Ovary (tissue), 10 donors: ENCODE measurements at regions of chr21 and their contacts with region 1.

Region 1: GRCh38 chr21:46219591-46220239 is 8.9 kb downstream of the LSS start:
- DNase-seq: peak in 1 of 5 donors; percentile 32
- H3K4me3 ChIP-seq: no peak overlapping the region
- H3K27ac ChIP-seq: no peak overlapping the region
- H3K4me1 ChIP-seq: no peaks in the 10 kb centered on the region
- H3K27me3 ChIP-seq: no peaks in the 10 kb centered on the region
- CTCF ChIP-seq: no peak
- EP300 ChIP-seq: no peak
- POLR2A ChIP-seq: no peak

Region 2: GRCh38 chr21:45923146-45923545 is 296.6 kb before region 1 on chr21:
- intact Hi-C with region 1: no loop called
- DNase-seq: peak; percentile 59 to 85 (median 69)
- H3K4me3 ChIP-seq: no peak overlapping the region
- H3K27ac ChIP-seq: no peak overlapping the region
- H3K4me1 ChIP-seq: no peaks in the 10 kb centered on the region
- H3K27me3 ChIP-seq: no peaks in the 10 kb centered on the region
- CTCF ChIP-seq: peak; percentile 47 to 66 (median 64)
- EP300 ChIP-seq: no peak
- POLR2A ChIP-seq: no peak

Region 3: DNA sequence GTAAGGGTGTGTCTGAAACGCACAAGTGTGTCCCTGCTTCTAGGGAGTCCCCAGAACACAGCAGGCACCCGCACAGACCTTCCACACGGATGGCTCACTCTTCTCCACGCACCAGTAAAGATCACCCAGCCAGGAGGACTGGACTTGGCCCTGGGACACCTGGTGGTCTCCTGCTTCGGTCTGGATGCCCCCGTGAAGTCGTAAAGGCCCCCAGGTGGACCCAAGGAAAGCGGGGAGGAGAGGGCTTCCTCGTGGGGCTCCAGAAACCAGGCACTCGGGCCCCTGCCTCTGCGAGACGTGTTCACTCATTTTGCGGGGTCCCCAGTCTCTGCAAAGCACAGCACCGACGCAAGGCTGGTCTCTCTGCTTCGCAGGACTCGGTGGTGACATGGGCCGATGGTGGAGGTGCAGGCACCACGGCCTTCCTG is 142.0 kb before region 1 on chr21:
- intact Hi-C with region 1: no loop called
- DNase-seq: peak in 2 of 5 donors; percentile 14 to 22
- H3K4me3 ChIP-seq: no peak overlapping the region
- H3K27ac ChIP-seq: no peak overlapping the region
- H3K4me1 ChIP-seq: no peaks in the 10 kb centered on the region
- H3K27me3 ChIP-seq: no peaks in the 10 kb centered on the region
- CTCF ChIP-seq: no peak
- EP300 ChIP-seq: no peak
- POLR2A ChIP-seq: no peak

Region 4: DNA sequence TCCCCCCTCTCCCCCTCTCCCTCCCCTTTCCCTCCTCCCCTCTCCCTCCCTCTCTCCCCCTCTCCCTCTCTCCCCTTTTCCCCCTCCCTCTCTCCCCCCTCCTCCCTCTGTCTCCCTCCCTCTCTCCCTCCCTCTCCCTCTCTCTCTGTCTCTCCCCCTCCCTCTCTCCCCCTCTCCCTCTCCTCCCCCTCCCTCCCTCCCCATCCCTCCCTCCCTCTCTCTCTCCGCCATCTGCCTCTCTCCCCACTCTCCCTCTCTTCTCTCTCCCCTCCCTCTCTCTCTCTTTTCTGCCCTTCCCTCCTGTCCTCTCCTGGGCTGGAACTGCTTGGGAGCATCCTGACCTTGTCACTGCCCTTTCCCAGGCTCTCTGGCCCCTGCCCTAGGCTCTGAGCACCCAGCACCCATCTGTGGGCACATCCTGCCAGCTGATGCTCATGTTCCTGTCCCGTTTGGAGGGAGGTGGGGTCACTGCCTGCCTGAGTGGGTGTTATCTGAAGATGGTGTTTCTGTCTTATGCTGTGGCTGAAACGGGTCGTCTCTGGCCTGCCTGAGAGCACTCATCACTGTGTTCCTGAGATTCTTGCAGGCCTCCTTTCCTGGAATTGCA is 75.1 kb before region 1 on chr21:
- intact Hi-C with region 1: loop called in 1 of 4 experiments (anchors 5 kb)
- DNase-seq: peak in 3 of 5 donors; percentile 17 to 34 (median 22)
- H3K4me3 ChIP-seq: no peak overlapping the region
- H3K27ac ChIP-seq: no peak overlapping the region
- H3K4me1 ChIP-seq: peaks cover 7% of the 10 kb centered on the region
- H3K27me3 ChIP-seq: no peaks in the 10 kb centered on the region
- CTCF ChIP-seq: no peak
- EP300 ChIP-seq: no peak
- POLR2A ChIP-seq: no peak